CD4-positive, alpha-beta memory T cell (primary cell): ENCODE measurements at regions of chr1 and their contacts with region 1.

Region 1: DNA sequence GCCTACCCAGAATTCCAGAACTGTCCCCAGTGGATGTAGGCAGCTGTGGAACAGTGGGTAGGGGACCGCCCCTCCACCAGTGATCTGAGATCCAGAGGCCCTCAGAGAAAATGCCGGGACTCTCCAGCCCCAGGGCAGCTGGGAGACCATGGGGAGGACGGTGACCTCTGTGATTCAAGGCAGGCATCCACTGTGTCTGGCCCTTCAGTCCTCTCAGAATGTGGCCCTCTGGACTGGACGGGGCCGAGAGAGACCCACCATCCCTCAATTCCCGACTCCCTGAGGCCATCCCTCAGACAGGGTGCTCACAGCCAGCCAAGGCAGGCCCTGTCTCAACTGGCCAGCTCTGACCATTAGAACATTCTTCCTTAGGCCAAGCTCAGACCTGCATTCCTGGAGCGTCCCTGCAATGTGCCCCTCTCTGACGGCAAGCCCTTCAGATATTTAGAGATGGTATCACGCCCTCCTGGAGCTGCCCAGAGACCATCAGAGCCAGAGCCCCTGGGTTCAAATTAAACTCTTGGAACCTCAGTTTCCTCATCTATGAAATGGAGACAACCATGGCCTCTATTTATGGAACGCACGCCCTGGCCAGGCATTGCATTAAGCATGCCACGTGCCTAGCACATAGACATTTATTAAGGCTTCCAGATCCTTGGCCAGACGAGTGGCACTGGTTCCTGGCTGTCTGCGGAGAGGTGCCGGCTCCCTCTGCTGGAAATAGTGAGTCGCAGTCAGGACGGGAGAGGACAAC is 9.6 kb upstream of the EPS8L3 start:
- DNase-seq: peak; percentile 68 to 76 (median 74)
- H3K4me3 ChIP-seq: no peak overlapping the region
- H3K4me3 Mint-ChIP-seq: no peak overlapping the region
- H3K27ac ChIP-seq: no peak overlapping the region
- H3K27ac Mint-ChIP-seq: peak overlapping the region in 5 of 7 donors; percentile 29 to 56 (median 42)
- H3K4me1 ChIP-seq: peaks cover 6% of the 10 kb centered on the region
- H3K4me1 Mint-ChIP-seq: peaks cover 9 to 21% (median 10%) of the 10 kb centered on the region in 4 donors
- H3K27me3 ChIP-seq: no peaks in the 10 kb centered on the region
- H3K27me3 Mint-ChIP-seq: peaks cover 0 to 3% of the 10 kb centered on the region in 2 donors

Region 2: DNA sequence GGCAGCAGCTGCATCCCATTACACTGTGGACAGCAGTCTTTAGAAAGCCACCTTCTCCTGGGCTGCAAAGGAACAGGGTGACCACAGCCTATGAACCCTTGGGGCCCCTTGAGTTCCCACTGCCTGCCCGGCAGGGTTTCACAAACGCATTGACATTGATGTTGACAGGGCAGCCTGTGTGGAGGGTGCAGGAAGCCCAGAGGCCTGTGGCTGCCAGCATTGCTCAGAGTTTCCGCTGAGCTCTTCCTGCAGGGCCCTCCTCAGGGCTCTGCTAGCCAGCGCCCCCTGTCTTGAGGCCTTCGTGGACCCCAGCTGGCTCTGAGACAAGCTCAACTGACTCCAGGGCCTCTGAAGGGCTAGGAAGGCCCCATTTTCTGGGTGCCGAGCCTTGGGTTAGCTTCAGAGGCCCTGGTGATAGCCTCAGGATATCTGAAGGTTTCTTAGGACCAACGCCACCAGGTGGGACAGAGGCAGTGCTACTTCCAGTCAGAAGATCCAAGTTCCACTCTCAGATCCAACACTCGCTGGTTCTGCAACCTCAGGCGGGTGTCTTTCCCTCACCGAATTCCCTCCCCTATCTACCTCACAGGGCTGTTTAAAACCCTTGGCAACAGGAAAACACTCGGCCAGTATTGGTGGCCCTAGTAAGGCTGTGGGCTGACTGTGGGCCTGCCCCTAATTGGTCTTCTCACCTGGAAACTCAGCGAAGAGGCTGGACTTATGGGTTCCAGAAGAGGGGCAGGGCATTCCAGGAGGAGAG is 17.6 kb after region 1 on chr1:
- CTCF ChIA-PET with region 1: interaction called, 154 read pairs
- POLR2A ChIA-PET with region 1: interaction called, 14 read pairs
- intact Hi-C with region 1: loop called (anchors 2 kb)
- DNase-seq: peak; percentile 72 to 87 (median 76)
- H3K4me3 ChIP-seq: no peak overlapping the region
- H3K4me3 Mint-ChIP-seq: peak overlapping the region in 7 of 8 donors; percentile 35 to 82 (median 55)
- H3K27ac ChIP-seq: peak overlapping the region; percentile 39
- H3K27ac Mint-ChIP-seq: peak overlapping the region; percentile 82 to 95 (median 92)
- H3K4me1 ChIP-seq: peaks cover 81% of the 10 kb centered on the region
- H3K4me1 Mint-ChIP-seq: peaks cover 43 to 91% (median 73%) of the 10 kb centered on the region in 4 donors
- H3K27me3 ChIP-seq: no peaks in the 10 kb centered on the region
- H3K27me3 Mint-ChIP-seq: no peaks in the 10 kb centered on the region

Region 3: GRCh38 chr1:109802901-109803561 is 29.7 kb after region 1 on chr1:
- CTCF ChIA-PET with region 1: interaction called, 34 read pairs
- POLR2A ChIA-PET with region 1: interaction called, 7 read pairs
- intact Hi-C with region 1: no loop called
- DNase-seq: peak in 1 of 5 donors; percentile 48
- H3K4me3 ChIP-seq: peak overlapping the region; percentile 18 to 26
- H3K4me3 Mint-ChIP-seq: peak overlapping the region; percentile 59 to 84 (median 80)
- H3K27ac ChIP-seq: peak overlapping the region; percentile 62
- H3K27ac Mint-ChIP-seq: peak overlapping the region; percentile 89 to 98 (median 93)
- H3K4me1 ChIP-seq: peaks cover 88% of the 10 kb centered on the region
- H3K4me1 Mint-ChIP-seq: peaks cover 53 to 91% (median 73%) of the 10 kb centered on the region in 4 donors
- H3K27me3 ChIP-seq: no peaks in the 10 kb centered on the region
- H3K27me3 Mint-ChIP-seq: no peaks in the 10 kb centered on the region

Region 4: GRCh38 chr1:109901524-109902145 is 128.3 kb after region 1 on chr1:
- CTCF ChIA-PET with region 1: interaction called, 18 read pairs
- POLR2A ChIA-PET with region 1: no interaction called
- intact Hi-C with region 1: no loop called
- DNase-seq: no peak
- H3K4me3 ChIP-seq: no peak overlapping the region
- H3K4me3 Mint-ChIP-seq: no peak overlapping the region
- H3K27ac ChIP-seq: no peak overlapping the region
- H3K27ac Mint-ChIP-seq: peak overlapping the region in 1 of 7 donors; percentile 17
- H3K4me1 ChIP-seq: peaks cover 14% of the 10 kb centered on the region
- H3K4me1 Mint-ChIP-seq: peaks cover 12 to 19% (median 14%) of the 10 kb centered on the region in 4 donors
- H3K27me3 ChIP-seq: no peaks in the 10 kb centered on the region
- H3K27me3 Mint-ChIP-seq: no peaks in the 10 kb centered on the region

Region 5: DNA sequence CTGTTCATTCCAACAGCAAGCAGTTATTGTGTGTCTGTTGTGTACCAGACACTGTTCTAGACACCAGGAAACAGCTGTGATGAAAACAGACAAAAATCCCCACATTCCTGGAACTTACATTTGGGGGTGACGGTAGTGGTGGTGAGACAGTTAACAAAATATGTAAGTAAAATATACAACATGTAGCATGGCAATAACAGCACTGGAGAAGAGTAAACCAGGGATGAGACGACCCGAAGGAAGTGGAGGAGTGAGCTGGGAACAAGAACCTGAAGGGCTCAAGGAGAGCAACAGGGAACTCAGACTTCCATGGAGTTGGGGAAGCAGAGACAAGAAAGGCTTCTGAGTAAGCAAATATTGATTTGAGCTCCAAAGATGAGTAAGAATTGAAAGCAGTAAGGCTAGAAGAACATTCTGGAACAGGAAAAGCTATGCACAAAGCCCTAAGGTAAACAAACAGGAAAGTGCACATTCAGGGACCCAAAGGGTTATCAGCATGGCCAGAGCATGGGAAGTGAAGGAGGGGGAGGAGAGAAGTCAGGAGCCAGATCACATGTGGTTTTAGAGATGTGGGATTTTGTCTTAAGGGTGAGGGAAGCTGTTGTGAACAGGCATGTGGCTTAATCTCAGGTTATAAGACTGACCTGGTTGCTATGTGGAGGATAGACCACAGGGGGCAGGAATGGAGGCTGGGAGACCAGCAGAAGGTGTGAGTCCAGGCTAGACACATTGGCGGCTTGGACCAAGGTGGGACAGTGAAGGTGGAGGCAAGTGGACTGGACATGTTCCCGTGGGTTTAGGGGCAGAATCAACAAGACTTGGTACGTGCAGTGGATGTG is 144.7 kb after region 1 on chr1:
- CTCF ChIA-PET with region 1: interaction called, 20 read pairs
- POLR2A ChIA-PET with region 1: no interaction called
- intact Hi-C with region 1: no loop called
- DNase-seq: no peak
- H3K4me3 ChIP-seq: no peak overlapping the region
- H3K4me3 Mint-ChIP-seq: no peak overlapping the region
- H3K27ac ChIP-seq: no peak overlapping the region
- H3K27ac Mint-ChIP-seq: peak overlapping the region in 4 of 7 donors; percentile 14 to 88 (median 40)
- H3K4me1 ChIP-seq: peaks cover 27% of the 10 kb centered on the region
- H3K4me1 Mint-ChIP-seq: peaks cover 22 to 29% (median 26%) of the 10 kb centered on the region in 4 donors
- H3K27me3 ChIP-seq: no peaks in the 10 kb centered on the region
- H3K27me3 Mint-ChIP-seq: no peaks in the 10 kb centered on the region

Region 6: DNA sequence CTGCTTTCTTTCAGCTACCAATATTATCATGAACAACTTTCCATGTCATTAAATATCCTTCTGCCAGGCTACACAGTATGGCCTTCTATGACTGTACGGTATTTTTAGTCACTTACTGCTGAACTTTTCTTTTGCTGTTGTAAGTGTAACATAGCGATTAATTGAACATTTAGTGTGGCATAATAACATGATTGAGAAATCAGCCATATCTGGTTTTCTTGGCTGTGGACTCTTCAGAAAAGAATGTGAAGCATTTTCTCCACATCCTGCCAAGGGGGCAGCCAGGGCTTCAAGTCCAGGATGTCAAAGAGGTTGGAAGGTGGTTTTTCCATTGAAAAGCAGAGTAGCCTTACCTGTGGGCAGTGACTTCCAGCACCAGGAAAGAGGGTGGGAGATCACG is 202.4 kb after region 1 on chr1:
- CTCF ChIA-PET with region 1: interaction called, 864 read pairs
- POLR2A ChIA-PET with region 1: interaction called, 4 read pairs
- intact Hi-C with region 1: no loop called
- DNase-seq: no peak
- H3K4me3 ChIP-seq: no peak overlapping the region
- H3K4me3 Mint-ChIP-seq: no peak overlapping the region
- H3K27ac ChIP-seq: no peak overlapping the region
- H3K27ac Mint-ChIP-seq: no peak overlapping the region
- H3K4me1 ChIP-seq: no peaks in the 10 kb centered on the region
- H3K4me1 Mint-ChIP-seq: peaks cover 0 to 1% (median 0%) of the 10 kb centered on the region in 4 donors
- H3K27me3 ChIP-seq: no peaks in the 10 kb centered on the region
- H3K27me3 Mint-ChIP-seq: peaks cover 6 to 8% of the 10 kb centered on the region in 2 donors

Region 7: DNA sequence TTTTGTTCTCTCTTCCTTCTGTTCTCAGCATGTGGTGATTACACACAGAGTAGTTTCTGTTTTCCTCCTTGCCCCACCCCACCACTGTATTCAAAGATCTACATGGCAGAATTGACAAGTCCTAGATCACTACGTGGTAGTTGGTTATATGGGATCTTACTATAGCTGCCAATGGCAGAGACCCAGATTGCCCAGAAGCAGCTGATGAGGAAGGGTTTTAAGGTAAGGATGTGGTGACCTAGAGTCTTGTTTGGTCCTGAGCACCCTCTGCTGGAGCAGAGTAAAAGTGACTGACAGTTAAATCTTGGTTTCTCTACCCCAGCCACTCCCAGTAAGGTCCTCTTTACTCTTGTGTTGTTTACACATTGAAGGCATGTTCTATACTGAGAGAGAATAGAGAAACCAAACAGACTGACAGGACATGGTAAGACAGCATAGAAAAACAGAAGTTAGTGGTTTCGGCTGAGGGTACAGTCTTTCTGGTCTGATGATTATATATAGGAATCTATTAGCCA is 238.3 kb after region 1 on chr1:
- CTCF ChIA-PET with region 1: interaction called, 29 read pairs
- POLR2A ChIA-PET with region 1: no interaction called
- intact Hi-C with region 1: no loop called
- DNase-seq: peak in 4 of 5 donors; percentile 26 to 44 (median 40)
- H3K4me3 ChIP-seq: no peak overlapping the region
- H3K4me3 Mint-ChIP-seq: no peak overlapping the region
- H3K27ac ChIP-seq: no peak overlapping the region
- H3K27ac Mint-ChIP-seq: peak overlapping the region in 5 of 7 donors; percentile 19 to 91 (median 36)
- H3K4me1 ChIP-seq: no peaks in the 10 kb centered on the region
- H3K4me1 Mint-ChIP-seq: peaks cover 0 to 5% (median 4%) of the 10 kb centered on the region in 4 donors
- H3K27me3 ChIP-seq: no peaks in the 10 kb centered on the region
- H3K27me3 Mint-ChIP-seq: no peaks in the 10 kb centered on the region

Region 8: DNA sequence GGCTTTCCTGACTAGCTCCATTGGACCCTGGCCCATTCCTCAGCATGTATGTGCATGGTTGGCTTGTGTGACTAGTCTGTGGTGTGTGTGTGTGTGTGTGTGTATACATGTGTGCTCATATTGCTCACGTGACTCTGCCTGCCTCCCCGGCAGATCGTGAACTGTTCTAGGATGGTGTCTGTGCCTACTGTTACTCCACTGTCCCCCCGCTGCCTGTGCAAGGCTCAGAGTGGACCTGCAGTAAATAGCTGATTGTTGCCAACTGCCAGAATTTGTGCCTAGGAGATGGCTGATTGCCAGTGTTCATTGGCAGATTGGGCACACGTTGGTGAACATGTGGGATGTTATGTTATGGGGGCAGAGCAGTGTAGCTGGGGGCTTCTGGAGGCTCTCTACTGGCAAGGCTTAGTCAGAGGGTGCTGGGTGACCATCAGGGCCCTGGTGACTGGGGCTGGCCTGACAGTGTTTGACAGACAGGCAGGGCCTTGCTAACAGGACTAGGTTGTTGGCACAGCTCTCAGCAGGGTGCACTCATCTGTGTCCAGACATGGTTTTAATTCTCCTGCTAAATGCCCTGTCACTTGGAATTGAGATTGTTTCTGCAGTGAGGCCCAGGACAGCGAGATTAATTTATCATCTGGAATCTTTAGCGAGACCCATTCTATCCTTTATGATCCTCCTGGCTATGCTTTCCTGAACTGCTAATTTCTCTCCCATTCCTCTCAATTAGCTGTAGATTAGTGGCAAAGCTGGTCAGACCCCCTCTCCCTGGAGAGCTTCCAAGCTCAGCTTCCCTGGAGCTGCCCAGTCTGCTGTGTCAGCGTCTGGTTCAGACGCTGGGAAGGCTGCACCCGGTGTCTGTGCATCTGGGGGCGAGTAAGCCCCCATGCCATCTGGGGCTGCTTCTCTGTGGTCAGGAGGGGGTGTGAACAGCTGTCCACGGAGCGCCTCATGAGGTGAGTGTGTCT is 397.7 kb after region 1 on chr1:
- CTCF ChIA-PET with region 1: no interaction called
- POLR2A ChIA-PET with region 1: no interaction called
- intact Hi-C with region 1: no loop called
- DNase-seq: no peak
- H3K4me3 ChIP-seq: no peak overlapping the region
- H3K4me3 Mint-ChIP-seq: no peak overlapping the region
- H3K27ac ChIP-seq: no peak overlapping the region
- H3K27ac Mint-ChIP-seq: no peak overlapping the region
- H3K4me1 ChIP-seq: no peaks in the 10 kb centered on the region
- H3K4me1 Mint-ChIP-seq: no peaks in the 10 kb centered on the region
- H3K27me3 ChIP-seq: no peaks in the 10 kb centered on the region
- H3K27me3 Mint-ChIP-seq: peaks cover 0 to 19% of the 10 kb centered on the region in 2 donors